Prostate gland (tissue), 2 donors: ENCODE measurements at regions of chr4 and their contacts with region 1.

Region 1: GRCh38 chr4:87422104-87423052 is at the start of gene NUDT9:
- DNase-seq: peak; percentile 93
- H3K4me3 ChIP-seq: peak within 1 kb of the TSS; percentile 72 to 76
- H3K27ac ChIP-seq: peak within 1 kb of the TSS; percentile 90 to 92
- H3K4me1 ChIP-seq: peaks cover 11% of the 10 kb centered on the region
- H3K27me3 ChIP-seq: no peaks in the 10 kb centered on the region
- CTCF ChIP-seq: peak in 1 of 4 experiments; percentile 12
- POLR2A ChIP-seq: peak; percentile 47
- total RNA-seq, gene NUDT9: 30.4 to 37.9 TPM

Region 2: DNA sequence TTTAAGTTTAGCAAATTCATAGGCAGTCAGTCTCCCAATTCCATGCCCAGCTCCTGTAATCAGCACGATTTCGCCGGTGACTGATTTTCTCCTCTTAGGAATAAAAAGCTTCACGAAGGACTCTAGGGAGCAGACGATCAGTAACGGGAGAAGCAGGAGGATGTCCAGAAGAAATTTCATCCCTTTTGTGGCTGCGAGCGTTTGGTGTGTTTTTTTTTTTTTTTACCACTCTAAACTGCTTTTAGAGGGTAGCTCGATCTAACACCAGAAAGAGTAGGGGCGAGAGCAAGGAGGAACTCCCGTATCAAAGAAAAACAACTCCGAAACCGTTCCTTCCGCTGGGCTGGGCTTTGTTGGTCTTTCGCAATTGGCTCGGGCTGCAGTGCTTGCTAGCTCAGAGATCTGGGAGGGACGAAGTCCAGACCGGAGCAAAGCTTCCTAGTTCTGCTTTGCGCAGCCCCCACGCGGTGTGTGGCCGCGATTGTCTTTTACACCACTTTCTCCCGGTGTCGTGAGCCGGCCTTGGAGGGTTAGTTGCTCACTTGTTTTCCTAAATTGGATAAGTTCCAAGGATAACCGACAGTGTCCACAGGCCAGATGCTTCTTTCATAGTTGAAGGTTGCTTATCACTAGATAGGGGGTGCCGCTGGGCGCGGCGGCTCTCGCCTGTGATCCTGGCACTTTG is 31.3 kb before region 1 on chr4 and contains the start of gene HSD17B11:
- intact Hi-C with region 1: loop called (anchors 1 kb)
- DNase-seq: peak; percentile 90
- H3K4me3 ChIP-seq: peak within 1 kb of the TSS; percentile 40 to 46
- H3K27ac ChIP-seq: peak within 1 kb of the TSS; percentile 79 to 87
- H3K4me1 ChIP-seq: no peaks in the 10 kb centered on the region
- H3K27me3 ChIP-seq: no peaks in the 10 kb centered on the region
- CTCF ChIP-seq: peak in 3 of 4 experiments; percentile 32 to 46 (median 32)
- POLR2A ChIP-seq: peak; percentile 75
- total RNA-seq, gene HSD17B11: 38.2 to 45.2 TPM

Region 3: GRCh38 chr4:87589522-87589921 is 167.1 kb after region 1 on chr4:
- intact Hi-C with region 1: no loop called
- DNase-seq: no peak
- H3K4me3 ChIP-seq: no peak overlapping the region
- H3K27ac ChIP-seq: no peak overlapping the region
- H3K4me1 ChIP-seq: no peaks in the 10 kb centered on the region
- H3K27me3 ChIP-seq: no peaks in the 10 kb centered on the region
- CTCF ChIP-seq: no peak
- POLR2A ChIP-seq: no peak

Region 4: DNA sequence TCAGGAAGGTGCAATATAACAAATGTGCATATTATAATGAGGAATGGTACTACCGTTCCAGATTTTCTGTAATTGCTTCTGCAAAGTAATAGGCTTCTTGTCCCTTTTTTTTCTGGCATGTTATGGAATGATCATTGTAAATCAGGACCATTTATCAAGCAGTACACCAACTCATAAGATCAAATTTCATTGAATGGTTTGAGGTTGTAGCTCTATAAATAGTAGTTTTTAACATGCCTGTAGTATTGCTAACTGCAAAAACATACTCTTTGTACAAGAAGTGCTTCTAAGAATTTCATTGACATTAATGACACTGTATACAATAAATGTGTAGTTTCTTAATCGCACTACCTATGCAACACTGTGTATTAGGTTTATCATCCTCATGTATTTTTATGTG is 389.6 kb after region 1 on chr4:
- intact Hi-C with region 1: no loop called
- DNase-seq: no peak
- H3K4me3 ChIP-seq: no peak overlapping the region
- H3K27ac ChIP-seq: no peak overlapping the region
- H3K4me1 ChIP-seq: no peaks in the 10 kb centered on the region
- H3K27me3 ChIP-seq: no peaks in the 10 kb centered on the region
- CTCF ChIP-seq: no peak
- POLR2A ChIP-seq: no peak